ENCODE measurements at regions of chr6 and their contacts with region 1.

Region 1: GRCh38 chr6:30489081-30490025 is at the start of gene HLA-E:
- DNase-seq: peak; percentile 79 to 99
- ATAC-seq: peak; percentile 83 to 90 (median 83)
- H3K4me3 ChIP-seq: peak within 1 kb of the TSS; percentile 100
- H3K4me3 Mint-ChIP-seq: peak within 1 kb of the TSS; percentile 97
- H3K27ac ChIP-seq: peak within 1 kb of the TSS; percentile 95
- H3K27ac Mint-ChIP-seq: peak within 1 kb of the TSS; percentile 96 to 97
- H3K4me1 ChIP-seq: peaks cover 48% of the 10 kb centered on the region
- H3K4me1 Mint-ChIP-seq: peaks cover 47 to 57% of the 10 kb centered on the region in 2 donors
- H3K27me3 ChIP-seq: no peaks in the 10 kb centered on the region
- H3K27me3 Mint-ChIP-seq: no peaks in the 10 kb centered on the region
- CTCF ChIP-seq: no peak
- total RNA-seq, gene HLA-E: 1,807 to 2,048 (median 1,904) TPM

Region 2: GRCh38 chr6:30508890-30509736 is 19.8 kb after region 1 on chr6:
- intact Hi-C with region 1: loop called (anchors 1 kb)
- DNase-seq: peak in 1 of 2 donors; percentile 86
- ATAC-seq: peak; percentile 77 to 85 (median 78)
- H3K4me3 ChIP-seq: no peak overlapping the region
- H3K4me3 Mint-ChIP-seq: peak overlapping the region; percentile 80
- H3K27ac ChIP-seq: peak overlapping the region; percentile 86
- H3K27ac Mint-ChIP-seq: peak overlapping the region; percentile 85 to 88
- H3K4me1 ChIP-seq: peaks cover 47% of the 10 kb centered on the region
- H3K4me1 Mint-ChIP-seq: peaks cover 38 to 40% of the 10 kb centered on the region in 2 donors
- H3K27me3 ChIP-seq: no peaks in the 10 kb centered on the region
- H3K27me3 Mint-ChIP-seq: no peaks in the 10 kb centered on the region
- CTCF ChIP-seq: no peak

Region 3: DNA sequence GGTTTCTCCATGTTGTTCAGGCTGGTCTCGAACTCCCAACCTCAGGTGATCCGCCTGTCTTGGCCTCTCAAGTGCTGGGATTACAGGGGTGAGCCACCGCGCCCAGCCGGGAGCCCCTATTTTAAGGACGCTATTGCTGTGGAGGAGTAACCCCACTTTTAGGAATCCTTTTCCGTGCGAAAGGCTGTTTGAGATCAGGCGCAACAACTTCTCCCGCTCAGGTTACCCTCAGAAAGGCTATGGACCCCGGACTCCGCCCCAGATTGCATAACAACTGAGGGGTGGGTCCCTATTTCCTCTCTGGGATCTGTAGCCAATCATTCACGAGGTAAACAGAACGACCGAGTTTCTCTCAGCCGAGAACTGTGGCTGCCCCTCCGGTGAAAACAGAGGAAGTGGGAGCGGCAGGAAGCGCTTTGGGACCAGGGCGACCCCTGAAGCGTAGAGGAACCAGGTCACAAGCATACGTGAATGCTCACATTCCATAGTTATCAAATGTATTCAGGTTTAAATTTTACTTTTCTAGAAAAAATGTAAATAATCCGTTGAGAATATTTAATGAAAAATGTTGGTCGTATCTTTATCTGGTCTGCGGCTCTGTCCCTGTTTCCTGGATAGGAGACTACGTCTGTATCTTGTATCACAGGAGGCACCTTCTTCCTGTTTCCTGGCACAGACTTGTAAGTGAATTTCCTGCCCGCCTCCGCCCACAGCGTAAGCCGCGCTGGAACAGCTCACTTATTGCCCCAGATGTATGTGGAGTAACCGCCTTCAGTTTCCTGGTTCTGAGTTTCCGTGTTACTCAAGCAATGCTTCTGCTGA is 26.8 kb after region 1 on chr6:
- intact Hi-C with region 1: loop called (anchors 1 kb)
- DNase-seq: peak; percentile 76 to 97
- ATAC-seq: peak; percentile 88 to 93 (median 88)
- H3K4me3 ChIP-seq: peak overlapping the region; percentile 47
- H3K4me3 Mint-ChIP-seq: peak overlapping the region; percentile 89
- H3K27ac ChIP-seq: peak overlapping the region; percentile 94
- H3K27ac Mint-ChIP-seq: peak overlapping the region; percentile 93 to 96
- H3K4me1 ChIP-seq: peaks cover 46% of the 10 kb centered on the region
- H3K4me1 Mint-ChIP-seq: peaks cover 37 to 38% of the 10 kb centered on the region in 2 donors
- H3K27me3 ChIP-seq: no peaks in the 10 kb centered on the region
- H3K27me3 Mint-ChIP-seq: no peaks in the 10 kb centered on the region
- CTCF ChIP-seq: no peak

Region 4: GRCh38 chr6:30600451-30600961 is 111.2 kb after region 1 on chr6:
- intact Hi-C with region 1: no loop called
- DNase-seq: no peak
- ATAC-seq: no peak
- H3K4me3 ChIP-seq: no peak overlapping the region
- H3K4me3 Mint-ChIP-seq: peak overlapping the region; percentile 32
- H3K27ac ChIP-seq: peak overlapping the region; percentile 51
- H3K27ac Mint-ChIP-seq: peak overlapping the region; percentile 70 to 73
- H3K4me1 ChIP-seq: peaks cover 33% of the 10 kb centered on the region
- H3K4me1 Mint-ChIP-seq: peaks cover 37 to 40% of the 10 kb centered on the region in 2 donors
- H3K27me3 ChIP-seq: no peaks in the 10 kb centered on the region
- H3K27me3 Mint-ChIP-seq: no peaks in the 10 kb centered on the region
- CTCF ChIP-seq: no peak

Region 5: DNA sequence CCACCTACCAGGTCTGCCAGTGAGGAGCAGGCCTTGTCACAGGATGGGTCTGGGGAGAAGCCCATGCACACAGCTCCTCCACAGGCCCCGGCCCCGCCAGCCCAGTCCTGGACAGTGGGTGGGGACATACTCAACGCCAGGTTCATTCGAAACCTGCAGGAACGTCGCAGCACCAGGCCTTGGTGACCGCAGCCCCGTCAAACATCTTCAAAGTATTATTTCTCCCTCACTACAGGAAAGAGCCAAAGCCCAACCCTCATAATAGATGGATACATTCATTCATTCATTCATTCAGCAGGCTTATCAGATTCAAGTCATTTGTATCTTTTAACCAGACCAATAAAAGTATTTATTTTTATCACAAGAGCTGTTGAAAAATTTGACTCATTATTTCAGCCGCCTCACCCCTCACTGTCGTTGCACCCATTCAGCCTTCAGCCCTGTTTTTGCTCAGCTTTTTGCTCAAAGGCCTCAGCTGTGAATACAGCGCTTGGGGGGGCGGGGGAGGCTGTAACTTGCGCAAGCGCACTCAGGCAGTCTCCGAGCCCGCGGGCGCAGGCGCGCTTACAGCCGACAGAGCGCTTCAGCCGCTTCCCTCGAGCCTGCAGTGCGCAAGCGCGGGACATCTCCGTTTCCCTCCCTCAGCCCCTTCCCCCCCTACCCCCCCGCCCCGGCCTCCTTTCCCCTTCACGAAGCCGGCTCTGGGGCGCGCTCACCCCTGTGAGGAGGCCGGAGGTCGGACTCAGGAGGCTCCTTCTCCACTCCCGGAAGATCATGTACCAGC is 157.3 kb after region 1 on chr6 and contains the start of gene C6orf136:
- intact Hi-C with region 1: no loop called
- DNase-seq: peak; percentile 85 to 99
- ATAC-seq: peak; percentile 77 to 87 (median 80)
- H3K4me3 ChIP-seq: peak within 1 kb of the TSS; percentile 96
- H3K4me3 Mint-ChIP-seq: peak within 1 kb of the TSS; percentile 86
- H3K27ac ChIP-seq: peak within 1 kb of the TSS; percentile 98
- H3K27ac Mint-ChIP-seq: peak within 1 kb of the TSS; percentile 82 to 83
- H3K4me1 ChIP-seq: peaks cover 16% of the 10 kb centered on the region
- H3K4me1 Mint-ChIP-seq: peaks cover 15 to 24% of the 10 kb centered on the region in 2 donors
- H3K27me3 ChIP-seq: no peaks in the 10 kb centered on the region
- H3K27me3 Mint-ChIP-seq: no peaks in the 10 kb centered on the region
- CTCF ChIP-seq: no peak
- total RNA-seq, gene C6orf136: 39.4 to 51.4 (median 50.9) TPM